ENCODE measurements at regions of chr1 and their contacts with region 1.

Region 1: DNA sequence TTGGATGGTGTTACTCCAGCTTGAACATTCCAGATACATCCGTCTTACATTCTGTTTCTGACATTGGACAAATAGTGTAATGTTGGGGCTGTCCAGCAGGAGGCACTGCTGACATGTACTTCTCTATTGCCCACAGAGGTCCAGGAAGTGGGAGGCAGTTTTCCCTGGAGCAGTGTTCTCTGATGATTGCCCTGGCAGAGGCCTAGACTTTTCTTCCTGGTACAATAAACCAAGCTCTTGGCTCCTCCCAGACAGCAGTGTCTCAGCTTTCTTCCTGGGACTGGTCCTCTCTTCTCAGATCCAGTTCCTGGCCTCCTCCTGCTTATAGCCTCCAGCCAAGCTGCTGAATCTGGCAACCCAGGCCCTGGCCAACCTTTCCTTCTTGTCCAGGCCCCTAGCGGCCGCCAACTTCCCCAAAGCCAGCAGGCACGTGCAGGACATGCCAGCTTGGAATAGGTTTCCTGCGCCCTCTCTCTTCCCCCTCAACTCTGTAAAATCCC is 14.9 kb upstream of the IFNLR1 start:
- DNase-seq: peak; percentile 53
- H3K4me3 ChIP-seq: no peak overlapping the region
- CTCF ChIP-seq: peak; percentile 84

Region 2: DNA sequence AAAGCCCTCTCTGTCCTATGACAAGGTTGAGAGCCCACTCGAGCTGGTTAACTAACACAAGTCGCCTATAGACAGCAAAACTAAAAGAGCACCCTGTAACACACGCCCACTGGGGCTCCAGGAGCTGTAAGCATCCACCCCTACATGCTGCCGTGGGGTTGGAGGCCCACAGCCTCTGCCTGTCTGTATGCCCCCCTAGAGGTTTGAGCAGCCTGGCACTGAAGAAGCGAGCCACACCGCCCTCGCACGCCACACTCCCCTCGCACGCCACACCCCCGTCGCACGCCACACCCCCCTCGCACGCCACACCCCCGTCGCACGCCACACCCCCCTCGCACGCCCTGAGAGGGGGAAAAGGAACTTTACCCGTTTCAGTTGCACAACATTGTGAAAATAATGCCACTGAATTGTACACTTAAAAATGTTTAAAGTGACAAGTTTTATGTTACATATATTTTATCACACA is 363.6 kb before region 1 on chr1:
- CTCF ChIA-PET with region 1: no interaction called
- POLR2A ChIA-PET with region 1: no interaction called
- DNase-seq: no peak
- H3K4me3 ChIP-seq: peak overlapping the region; percentile 48
- CTCF ChIP-seq: no peak

Region 3: GRCh38 chr1:23959041-23959460 is 242.9 kb before region 1 on chr1:
- CTCF ChIA-PET with region 1: no interaction called
- POLR2A ChIA-PET with region 1: no interaction called
- DNase-seq: peak; percentile 65
- H3K4me3 ChIP-seq: peak overlapping the region; percentile 55
- CTCF ChIP-seq: peak; percentile 53

Region 4: GRCh38 chr1:24070821-24071393 is 131.1 kb before region 1 on chr1:
- CTCF ChIA-PET with region 1: interaction called, 26 read pairs
- POLR2A ChIA-PET with region 1: no interaction called
- DNase-seq: no peak
- H3K4me3 ChIP-seq: no peak overlapping the region
- CTCF ChIP-seq: peak; percentile 87

Region 5: GRCh38 chr1:24235921-24236781 is 34.2 kb after region 1 on chr1:
- CTCF ChIA-PET with region 1: interaction called, 13 read pairs
- POLR2A ChIA-PET with region 1: no interaction called
- DNase-seq: no peak
- H3K4me3 ChIP-seq: no peak overlapping the region
- CTCF ChIP-seq: no peak

Region 6: DNA sequence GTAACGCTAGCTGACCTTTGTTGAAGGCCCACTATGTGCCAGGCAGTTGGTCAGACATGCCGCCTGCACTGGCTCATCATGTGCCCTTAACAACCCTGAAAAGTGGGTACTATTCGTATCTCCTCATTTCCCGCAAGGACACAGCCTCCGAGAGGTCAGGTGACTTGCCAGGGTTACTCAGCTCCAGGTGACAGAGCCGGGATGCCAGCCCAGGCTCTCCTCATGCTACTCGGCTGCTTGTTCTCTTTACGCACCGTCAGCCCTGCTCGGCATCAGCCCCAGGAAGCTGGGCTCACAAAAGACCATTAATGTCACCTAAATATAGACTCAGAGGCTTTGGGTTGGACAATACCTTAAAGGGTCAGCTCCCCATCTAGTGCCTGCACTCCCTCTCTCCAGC is 146.2 kb after region 1 on chr1:
- CTCF ChIA-PET with region 1: interaction called, 11 read pairs
- POLR2A ChIA-PET with region 1: no interaction called
- DNase-seq: no peak
- H3K4me3 ChIP-seq: no peak overlapping the region
- CTCF ChIP-seq: no peak

Region 7: GRCh38 chr1:24391882-24392603 is 190.1 kb after region 1 on chr1:
- CTCF ChIA-PET with region 1: interaction called, 847 read pairs
- POLR2A ChIA-PET with region 1: interaction called, 4 read pairs
- DNase-seq: no peak
- H3K4me3 ChIP-seq: no peak overlapping the region
- CTCF ChIP-seq: peak; percentile 78

Region 8: GRCh38 chr1:24586970-24587820 is 385.2 kb after region 1 on chr1:
- CTCF ChIA-PET with region 1: interaction called, 55 read pairs
- POLR2A ChIA-PET with region 1: no interaction called
- DNase-seq: peak; percentile 9
- H3K4me3 ChIP-seq: no peak overlapping the region
- CTCF ChIP-seq: peak; percentile 65

Measured in AG04449 (cell line).